HCT116 (cell line): ENCODE measurements at regions of chr9 and their contacts with region 1.

Region 1: GRCh38 chr9:385818-386398 is 171.2 kb downstream of the DOCK8 start:
- DNase-seq: peak; percentile 52
- ATAC-seq: peak; percentile 98
- H3K4me3 ChIP-seq: no peak overlapping the region
- H3K27ac ChIP-seq: no peak overlapping the region
- H3K4me1 ChIP-seq: no peaks in the 10 kb centered on the region
- H3K27me3 ChIP-seq: no peaks in the 10 kb centered on the region
- CTCF ChIP-seq: peak; percentile 91
- POLR2A ChIP-seq: no peak
- RAD21 ChIP-seq: peak; percentile 93

Region 2: GRCh38 chr9:546797-547223 is 160.9 kb after region 1 on chr9:
- CTCF ChIA-PET with region 1: no interaction called
- POLR2A ChIA-PET with region 1: no interaction called
- RAD21 ChIA-PET with region 1: no interaction called
- intact Hi-C with region 1: loop called (anchors 2 kb)
- DNase-seq: no peak
- ATAC-seq: peak; percentile 50; the same call in 1 of the 2 replicates
- H3K4me3 ChIP-seq: no peak overlapping the region
- H3K27ac ChIP-seq: no peak overlapping the region
- H3K4me1 ChIP-seq: no peaks in the 10 kb centered on the region
- H3K27me3 ChIP-seq: no peaks in the 10 kb centered on the region
- CTCF ChIP-seq: 0 out of 6 replicates have a peak, but pooled peaks of 2 of the 3 experiments have one; percentile 13 to 24
- POLR2A ChIP-seq: no peak
- RAD21 ChIP-seq: peak; percentile 39

Region 3: GRCh38 chr9:613771-614347 is 228.0 kb after region 1 on chr9:
- CTCF ChIA-PET with region 1: no interaction called
- POLR2A ChIA-PET with region 1: no interaction called
- RAD21 ChIA-PET with region 1: no interaction called
- intact Hi-C with region 1: loop called (anchors 5 kb)
- DNase-seq: peak; percentile 13
- ATAC-seq: peak; percentile 97
- H3K4me3 ChIP-seq: no peak overlapping the region
- H3K27ac ChIP-seq: no peak overlapping the region
- H3K4me1 ChIP-seq: no peaks in the 10 kb centered on the region
- H3K27me3 ChIP-seq: no peaks in the 10 kb centered on the region
- CTCF ChIP-seq: peak; percentile 40 to 97 (median 69)
- POLR2A ChIP-seq: no peak
- RAD21 ChIP-seq: peak; percentile 73

Region 4: GRCh38 chr9:757246-757881 is 371.5 kb after region 1 on chr9:
- CTCF ChIA-PET with region 1: interaction called, 5 read pairs
- POLR2A ChIA-PET with region 1: interaction called, 3 read pairs
- RAD21 ChIA-PET with region 1: no interaction called
- intact Hi-C with region 1: loop called (anchors 2 kb)
- DNase-seq: peak; percentile 24
- ATAC-seq: peak; percentile 82
- H3K4me3 ChIP-seq: no peak overlapping the region
- H3K27ac ChIP-seq: no peak overlapping the region
- H3K4me1 ChIP-seq: peaks cover 8 to 25% of the 10 kb centered on the region in 2 experiments
- H3K27me3 ChIP-seq: no peaks in the 10 kb centered on the region
- CTCF ChIP-seq: peak; percentile 42 to 67 (median 54)
- POLR2A ChIP-seq: no peak
- RAD21 ChIP-seq: peak; percentile 77

Region 5: GRCh38 chr9:763692-764524 is 378.0 kb after region 1 on chr9:
- CTCF ChIA-PET with region 1: no interaction called
- POLR2A ChIA-PET with region 1: no interaction called
- RAD21 ChIA-PET with region 1: interaction called in 1 of 2 experiments, 3 read pairs
- intact Hi-C with region 1: loop called (anchors 1 kb)
- DNase-seq: peak; percentile 90
- ATAC-seq: peak; percentile 100
- H3K4me3 ChIP-seq: no peak overlapping the region; a peak in 1 of 4 replicates
- H3K27ac ChIP-seq: no peak overlapping the region
- H3K4me1 ChIP-seq: peaks cover 3 to 6% of the 10 kb centered on the region in 2 experiments; a peak in 3 of 4 replicates
- H3K27me3 ChIP-seq: peaks cover 4% of the 10 kb centered on the region; the same call in 1 of the 2 replicates
- CTCF ChIP-seq: peak; percentile 81 to 96 (median 93)
- POLR2A ChIP-seq: no peak
- RAD21 ChIP-seq: peak; percentile 95

Region 6: DNA sequence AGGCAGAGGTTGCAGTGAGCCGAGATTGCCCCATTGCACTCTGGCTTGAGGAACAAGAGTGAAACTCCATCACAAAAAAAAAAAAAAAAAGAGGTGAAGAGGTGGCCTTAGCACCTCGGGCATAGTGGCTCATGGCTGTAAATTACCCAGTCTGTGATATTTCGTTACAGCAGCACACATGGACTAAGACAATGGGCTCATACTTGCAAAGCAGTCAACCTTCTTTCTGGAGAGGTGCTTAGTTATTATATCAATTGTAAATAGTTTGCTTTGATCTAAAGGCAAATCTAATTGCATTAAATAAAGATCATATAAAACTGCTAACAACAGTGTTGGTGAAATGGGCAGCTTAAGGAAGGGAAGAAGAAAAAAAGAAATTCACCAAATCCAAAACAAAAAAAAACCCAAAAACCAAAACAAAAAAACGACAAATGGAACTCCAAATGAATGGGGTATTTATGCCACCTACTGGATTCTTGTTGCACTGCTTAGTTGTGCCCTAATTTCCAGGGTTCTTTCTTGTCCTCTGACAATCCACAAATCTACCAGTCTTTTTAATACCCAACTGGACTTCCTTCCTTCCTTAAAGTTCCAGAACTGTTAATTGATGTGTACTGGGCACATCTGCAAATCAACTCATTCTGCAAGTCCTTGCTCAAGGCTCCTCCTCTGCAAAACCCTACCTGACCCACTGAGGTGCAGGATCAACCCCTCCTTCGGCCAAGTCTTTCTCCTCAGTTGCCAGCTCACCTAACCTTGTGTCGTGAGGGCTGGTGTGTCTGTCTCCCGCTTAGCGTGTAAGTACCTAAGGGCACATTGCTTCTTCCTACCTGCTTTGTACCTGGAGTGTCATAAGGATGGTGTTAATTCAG is 420.6 kb after region 1 on chr9:
- CTCF ChIA-PET with region 1: no interaction called
- POLR2A ChIA-PET with region 1: no interaction called
- RAD21 ChIA-PET with region 1: no interaction called
- intact Hi-C with region 1: loop called (anchors 1 kb)
- DNase-seq: no peak
- ATAC-seq: peak; percentile 77
- H3K4me3 ChIP-seq: no peak overlapping the region
- H3K27ac ChIP-seq: no peak overlapping the region
- H3K4me1 ChIP-seq: peaks cover 0 to 6% of the 10 kb centered on the region in 2 experiments; a peak in 2 of 4 replicates
- H3K27me3 ChIP-seq: no peaks in the 10 kb centered on the region
- CTCF ChIP-seq: peak; percentile 56 to 77 (median 56); a peak in 5 of 6 replicates
- POLR2A ChIP-seq: no peak
- RAD21 ChIP-seq: peak; percentile 69